Posterior vena cava (tissue), 2 donors: ENCODE measurements at regions of chr6 and their contacts with region 1.

Region 1: DNA sequence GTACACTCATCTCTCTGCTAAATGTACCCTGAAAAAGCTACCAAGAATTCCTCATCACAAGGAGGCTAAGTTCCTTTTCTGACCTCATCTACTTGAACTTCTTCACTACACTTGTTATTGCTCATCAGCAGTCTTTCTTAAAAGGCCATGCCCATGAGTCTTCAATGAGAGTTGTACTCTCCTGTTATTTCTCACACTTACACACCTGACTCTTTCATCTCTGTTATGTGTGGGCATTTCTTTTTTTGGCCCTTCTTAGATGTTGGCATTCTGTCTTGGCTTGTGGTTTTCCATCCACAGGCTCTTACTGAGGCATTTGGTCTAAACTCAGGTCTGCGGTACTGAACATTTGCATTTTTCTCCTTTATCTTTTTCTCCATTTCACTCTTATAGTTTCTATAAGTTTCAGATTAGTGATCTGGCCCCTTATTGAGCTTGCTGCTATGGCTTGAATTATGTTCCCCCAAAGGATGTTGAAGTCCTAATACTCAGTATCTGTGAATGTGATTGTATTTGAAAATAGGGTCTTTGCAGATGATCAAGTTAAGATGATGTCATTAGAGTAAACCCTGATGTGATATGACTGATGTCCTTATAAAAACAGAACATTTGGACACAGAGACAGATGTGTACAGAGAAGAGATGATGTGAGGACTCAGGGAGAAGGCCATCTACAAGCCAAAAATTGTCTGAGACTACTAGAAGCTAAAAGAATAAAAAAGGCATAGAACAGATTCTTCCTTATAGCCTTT is 10.8 kb upstream of the SLC17A1 start:
- DNase-seq: no peak

Region 2: GRCh38 chr6:25205629-25206028 is 637.1 kb before region 1 on chr6:
- intact Hi-C with region 1: no loop called
- DNase-seq: no peak

Region 3: DNA sequence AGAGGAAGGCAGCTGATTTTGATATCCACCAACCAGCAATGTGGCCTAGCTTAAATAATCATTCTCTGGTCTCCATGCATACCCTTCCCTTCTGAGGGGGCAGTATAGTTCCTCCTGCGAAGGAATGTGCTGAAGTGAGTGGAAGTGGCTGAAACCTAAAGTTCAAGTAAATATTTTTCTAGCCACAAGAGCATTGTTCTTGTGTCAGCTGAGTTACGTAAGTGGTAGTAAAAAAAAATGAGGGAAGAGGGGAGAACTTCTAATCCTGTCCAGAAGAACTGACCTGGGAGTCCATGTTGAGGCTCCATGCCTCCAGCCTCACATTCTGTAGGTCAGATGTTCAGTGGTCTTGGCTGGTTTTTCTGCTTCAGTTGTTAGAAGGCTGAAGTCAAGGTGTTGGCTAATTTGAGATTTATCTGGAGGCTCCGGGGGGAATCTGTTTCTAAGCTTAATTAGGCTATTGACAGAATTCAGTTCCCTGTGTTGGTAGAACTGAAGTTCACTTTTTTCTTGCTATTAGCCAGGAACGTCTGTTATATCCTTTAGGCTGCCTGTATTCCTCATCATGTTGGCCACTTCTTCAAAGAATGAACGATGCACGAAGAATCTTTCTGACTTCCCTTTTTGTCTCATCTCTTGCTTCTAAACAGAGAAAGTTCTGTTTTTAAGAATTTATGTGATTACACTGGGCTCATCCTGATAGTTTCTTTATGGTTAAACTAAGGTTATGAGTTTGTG is 1197.7 kb after region 1 on chr6:
- intact Hi-C with region 1: loop called in 1 of 2 experiments (anchors 5 kb)
- DNase-seq: no peak